Stomach (tissue), 19 donors: ENCODE measurements at regions of chr12 and their contacts with region 1.

Region 1: DNA sequence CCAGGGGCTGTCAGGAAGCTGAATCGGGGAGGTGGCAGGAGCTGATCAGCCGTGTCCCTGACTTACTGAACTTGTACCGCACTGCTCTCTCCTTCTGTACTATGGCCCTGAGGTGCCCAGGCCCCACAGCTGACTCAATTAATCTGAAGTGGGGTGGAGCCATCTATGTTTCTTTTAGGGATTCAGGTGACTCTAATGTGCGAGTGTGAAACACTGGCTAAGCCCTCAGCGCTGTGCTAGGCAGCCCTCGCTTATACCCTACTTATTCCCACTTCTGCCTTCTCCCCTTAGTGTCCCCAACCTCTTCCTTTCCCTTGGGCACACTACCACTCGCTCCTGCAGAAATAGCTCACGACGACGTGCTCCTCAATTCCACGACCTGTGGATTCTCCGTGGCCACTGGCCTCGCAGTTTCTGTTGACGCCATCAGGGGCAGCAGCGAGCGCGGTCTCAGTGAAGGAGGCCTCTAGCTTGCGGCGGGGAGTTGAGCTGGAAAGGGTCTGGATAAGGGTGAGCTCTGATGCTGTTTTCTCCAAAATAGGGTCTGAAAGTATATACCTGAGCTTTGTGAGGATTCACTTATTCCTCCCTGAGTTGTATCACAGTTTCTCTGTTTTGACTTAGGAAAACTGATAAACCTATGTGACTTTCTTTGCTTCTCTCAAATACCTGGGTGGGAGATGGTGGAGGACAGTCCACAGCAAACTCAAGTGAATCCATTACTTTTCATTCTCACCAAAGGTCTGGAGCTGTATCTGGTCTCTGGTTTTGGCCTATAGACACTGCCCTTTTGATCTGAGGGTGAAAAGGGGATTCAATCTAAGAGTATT is 167.6 kb downstream of the SLC41A2 start:
- DNase-seq: peak; percentile 40 to 67
- H3K4me3 ChIP-seq: no peak overlapping the region
- H3K27ac ChIP-seq: no peak overlapping the region
- H3K4me1 ChIP-seq: peaks cover 0 to 12% (median 8%) of the 10 kb centered on the region in 4 donors
- H3K27me3 ChIP-seq: no peaks in the 10 kb centered on the region
- CTCF ChIP-seq: peak in 5 of 7 experiments; percentile 25 to 67 (median 58)
- EP300 ChIP-seq: no peak
- POLR2A ChIP-seq: no peak

Region 2: GRCh38 chr12:104710940-104711689 is 79.4 kb before region 1 on chr12:
- intact Hi-C with region 1: loop called (anchors 10 kb)
- DNase-seq: peak in 1 of 2 donors; percentile 73
- H3K4me3 ChIP-seq: no peak overlapping the region
- H3K27ac ChIP-seq: peak overlapping the region in 4 of 5 donors; percentile 28 to 73 (median 66)
- H3K4me1 ChIP-seq: peaks cover 15 to 60% (median 40%) of the 10 kb centered on the region in 4 donors
- H3K27me3 ChIP-seq: no peaks in the 10 kb centered on the region
- CTCF ChIP-seq: no peak
- EP300 ChIP-seq: no peak
- POLR2A ChIP-seq: no peak

Region 3: DNA sequence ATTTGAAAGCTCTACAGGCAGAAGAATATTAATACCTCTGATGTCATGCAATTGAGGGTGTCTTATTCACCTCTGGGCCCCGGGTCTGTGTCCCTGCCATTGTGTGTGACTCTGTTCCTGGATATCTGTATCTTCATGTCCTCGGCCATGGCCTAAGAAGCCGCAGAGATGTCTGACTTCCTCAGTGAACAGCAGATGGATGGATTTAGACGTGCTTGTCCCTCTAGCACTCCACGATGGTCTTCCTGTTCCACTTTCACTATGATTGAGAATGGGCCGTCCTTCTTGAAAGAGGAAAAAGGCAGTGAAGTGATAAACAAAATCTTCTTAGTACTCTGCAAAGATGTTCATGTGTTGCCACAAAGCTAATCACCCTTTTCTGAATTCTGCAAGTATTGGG is 49.8 kb before region 1 on chr12:
- intact Hi-C with region 1: no loop called
- DNase-seq: peak in 1 of 2 donors; percentile 42
- H3K4me3 ChIP-seq: no peak overlapping the region
- H3K27ac ChIP-seq: peak overlapping the region in 1 of 5 donors; percentile 50
- H3K4me1 ChIP-seq: peaks cover 0 to 51% (median 29%) of the 10 kb centered on the region in 4 donors
- H3K27me3 ChIP-seq: no peaks in the 10 kb centered on the region
- CTCF ChIP-seq: no peak
- EP300 ChIP-seq: no peak
- POLR2A ChIP-seq: no peak

Region 4: DNA sequence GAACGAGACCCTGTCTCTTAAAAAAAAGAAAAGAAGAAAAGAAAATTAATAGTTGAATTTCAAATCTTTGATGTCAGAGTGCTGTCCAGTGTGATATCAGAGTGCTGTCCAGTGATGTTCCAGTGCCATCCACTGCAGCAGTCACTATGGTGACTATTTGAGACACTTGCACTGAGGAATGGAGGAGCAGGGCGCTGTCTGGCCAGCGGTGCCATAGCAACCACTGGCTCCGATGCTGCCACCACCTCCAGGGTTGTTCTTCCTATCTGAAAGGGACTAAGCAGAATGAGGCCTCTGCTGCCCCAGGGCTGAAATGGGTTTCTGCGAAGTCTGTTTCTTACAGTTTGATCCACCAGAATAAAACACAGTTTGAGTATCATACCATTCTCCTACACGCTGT is 1075.4 kb after region 1 on chr12:
- intact Hi-C with region 1: no loop called
- DNase-seq: no peak
- H3K4me3 ChIP-seq: no peak overlapping the region
- H3K27ac ChIP-seq: no peak overlapping the region
- H3K4me1 ChIP-seq: no peaks in the 10 kb centered on the region
- H3K27me3 ChIP-seq: no peaks in the 10 kb centered on the region
- CTCF ChIP-seq: no peak
- EP300 ChIP-seq: no peak
- POLR2A ChIP-seq: no peak